ENCODE measurements at regions of chrX and their contacts with region 1.

Region 1: GRCh38 chrX:17689971-17690409 is 47.3 kb upstream of the SCML1 start:
- DNase-seq: no peak
- ATAC-seq: peak; percentile 89
- H3K4me3 ChIP-seq: no peak overlapping the region
- H3K27ac ChIP-seq: no peak overlapping the region
- H3K4me1 ChIP-seq: no peaks in the 10 kb centered on the region
- H3K27me3 ChIP-seq: no peaks in the 10 kb centered on the region

Region 2: GRCh38 chrX:17206584-17206983 is 483.4 kb before region 1 on chrX:
- intact Hi-C with region 1: no loop called
- DNase-seq: no peak
- ATAC-seq: no peak
- H3K4me3 ChIP-seq: no peak overlapping the region
- H3K27ac ChIP-seq: no peak overlapping the region
- H3K4me1 ChIP-seq: no peaks in the 10 kb centered on the region
- H3K27me3 ChIP-seq: no peaks in the 10 kb centered on the region

Region 3: DNA sequence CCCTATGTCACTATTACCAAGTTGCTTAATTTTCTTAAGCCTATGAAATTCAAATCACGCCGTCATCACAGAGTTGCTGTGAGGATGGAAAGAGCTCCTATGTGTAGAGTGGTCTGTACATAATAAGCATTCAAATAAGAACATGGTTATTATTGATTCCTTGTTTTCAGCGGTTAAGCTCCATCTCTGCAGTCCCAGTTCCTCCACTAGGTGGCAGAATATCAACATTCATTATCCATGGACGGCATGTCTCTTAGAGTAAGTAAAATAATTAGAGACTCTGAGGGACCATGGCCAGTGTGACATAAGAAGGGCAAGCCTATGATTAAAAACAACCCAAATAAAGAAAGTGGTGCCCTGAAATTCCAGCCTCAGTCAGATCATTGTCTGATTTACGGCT is 447.5 kb before region 1 on chrX:
- intact Hi-C with region 1: loop called (anchors 2 kb)
- DNase-seq: no peak
- ATAC-seq: peak; percentile 75
- H3K4me3 ChIP-seq: no peak overlapping the region
- H3K27ac ChIP-seq: no peak overlapping the region
- H3K4me1 ChIP-seq: no peaks in the 10 kb centered on the region
- H3K27me3 ChIP-seq: no peaks in the 10 kb centered on the region

Region 4: GRCh38 chrX:17374619-17375366 is 315.2 kb before region 1 on chrX and contains the start of gene NHS:
- intact Hi-C with region 1: loop called in 1 of 2 experiments (anchors 2 kb)
- DNase-seq: peak; percentile 81 to 90
- ATAC-seq: peak; percentile 86
- H3K4me3 ChIP-seq: peak within 1 kb of the TSS; percentile 56 to 66
- H3K27ac ChIP-seq: peak within 1 kb of the TSS in 1 of 2 donors; percentile 63
- H3K4me1 ChIP-seq: no peaks in the 10 kb centered on the region
- H3K27me3 ChIP-seq: no peaks in the 10 kb centered on the region
- total RNA-seq, gene NHS: 19.1 to 28.2 TPM

Region 5: GRCh38 chrX:17521871-17522693 is 167.9 kb before region 1 on chrX:
- intact Hi-C with region 1: loop called in 1 of 2 experiments (anchors 10 kb)
- DNase-seq: no peak
- ATAC-seq: no peak
- H3K4me3 ChIP-seq: no peak overlapping the region
- H3K27ac ChIP-seq: no peak overlapping the region
- H3K4me1 ChIP-seq: no peaks in the 10 kb centered on the region
- H3K27me3 ChIP-seq: no peaks in the 10 kb centered on the region

Region 6: GRCh38 chrX:17590892-17591740 is 98.9 kb before region 1 on chrX:
- intact Hi-C with region 1: loop called (anchors 5 kb)
- DNase-seq: peak; percentile 67 to 79
- ATAC-seq: peak; percentile 83
- H3K4me3 ChIP-seq: peak overlapping the region; percentile 5 to 26
- H3K27ac ChIP-seq: peak overlapping the region; percentile 22 to 71
- H3K4me1 ChIP-seq: peaks cover 0 to 4% of the 10 kb centered on the region in 2 donors
- H3K27me3 ChIP-seq: no peaks in the 10 kb centered on the region

Measured in aorta (tissue), 5 donors.